GM10248 (cell line): ENCODE measurements at regions of chr5 and their contacts with region 1.

Region 1: DNA sequence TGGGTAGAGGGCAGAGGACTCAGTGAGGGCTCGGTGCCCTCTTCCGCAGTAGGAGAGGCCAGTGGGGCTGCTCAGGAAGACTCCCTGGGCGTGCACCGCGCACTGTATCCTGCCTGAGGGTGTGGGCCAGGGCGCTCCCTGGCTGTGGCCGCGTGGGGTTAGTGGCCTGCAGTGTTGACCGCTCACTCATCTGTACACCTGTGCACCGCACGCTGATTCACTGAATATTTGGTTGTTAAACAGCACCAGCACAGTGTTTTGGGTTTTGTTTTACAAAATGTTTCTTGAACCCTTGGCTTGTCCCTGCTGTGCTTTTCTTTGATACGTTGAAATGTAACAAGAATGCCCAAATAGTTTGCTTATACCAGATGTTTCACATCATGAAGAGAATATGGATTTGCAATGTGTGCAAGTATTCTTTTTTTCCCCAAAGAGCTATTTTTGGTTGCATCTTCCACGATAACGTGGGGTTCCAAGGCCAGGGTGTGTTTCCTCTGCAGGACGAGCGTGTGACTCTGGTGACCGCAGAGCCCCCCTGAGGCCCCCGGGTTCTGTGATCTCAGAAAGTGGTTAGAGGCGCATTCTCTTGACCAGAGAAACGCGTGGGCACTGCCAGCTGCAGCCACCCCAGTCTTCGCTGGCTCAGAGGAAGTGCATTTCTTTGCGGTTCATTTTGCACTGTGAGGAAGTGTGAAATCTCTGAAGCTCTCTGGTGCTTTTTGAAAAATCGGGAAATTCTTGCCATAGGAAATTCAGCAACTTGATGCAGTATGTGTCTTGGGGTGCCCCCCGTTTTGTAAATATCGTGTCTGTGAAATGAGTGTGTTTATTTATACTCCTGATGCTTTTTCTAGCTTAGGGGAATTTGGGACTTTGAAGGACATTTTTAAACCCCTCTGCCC is 46.9 kb downstream of the AHRR start:
- DNase-seq: peak; percentile 75
- CTCF ChIP-seq: no peak

Region 2: GRCh38 chr5:285639-286557 is 82.5 kb before region 1 on chr5:
- CTCF ChIA-PET with region 1: no interaction called
- POLR2A ChIA-PET with region 1: no interaction called
- DNase-seq: no peak
- CTCF ChIP-seq: no peak

Region 3: DNA sequence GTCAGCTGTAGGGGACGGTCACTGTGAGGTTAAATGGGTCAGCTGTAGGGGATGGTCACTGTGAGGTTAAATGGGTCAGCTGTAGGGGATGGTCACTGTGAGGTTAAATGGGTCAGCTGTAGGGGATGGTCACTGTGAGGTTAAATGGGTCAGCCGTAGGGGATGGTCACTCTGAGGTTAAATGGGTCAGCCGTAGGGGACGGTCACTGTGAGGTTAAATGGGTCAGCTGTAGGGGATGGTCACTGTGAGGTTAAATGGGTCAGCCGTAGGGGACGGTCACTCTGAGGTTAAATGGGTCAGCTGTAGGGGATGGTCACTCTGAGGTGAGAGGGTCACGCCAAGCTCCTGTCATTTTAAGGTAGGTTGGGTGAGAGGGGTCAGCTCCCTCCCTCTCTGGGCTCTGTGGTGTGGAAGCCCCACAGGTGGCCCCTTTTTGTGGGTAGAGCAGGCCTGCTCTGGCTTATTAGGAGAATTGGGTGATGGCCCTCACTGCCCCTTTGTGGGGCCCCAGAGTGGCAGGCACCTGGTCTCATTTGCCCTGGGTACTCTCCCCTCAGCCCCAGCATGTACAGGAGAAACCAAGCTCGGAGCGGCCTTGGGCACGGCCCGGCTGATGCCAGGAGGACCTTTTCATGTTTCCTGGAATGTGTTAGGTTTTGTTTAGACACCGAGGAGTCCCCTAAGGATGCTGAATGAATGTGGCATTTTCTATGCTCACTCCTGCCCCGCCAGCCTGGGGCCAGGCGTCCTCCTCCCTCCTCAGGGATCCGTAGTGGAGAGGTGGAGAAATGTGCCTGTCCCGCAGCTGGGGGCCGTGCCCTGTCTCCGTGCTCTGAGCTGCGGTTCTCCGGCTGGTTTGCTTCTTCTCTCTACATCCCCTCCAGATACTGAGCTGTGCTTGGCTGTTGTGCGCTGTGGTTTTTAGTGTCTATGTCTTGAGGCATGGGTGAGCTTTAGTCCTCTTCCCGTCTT is 15.5 kb before region 1 on chr5:
- CTCF ChIA-PET with region 1: interaction called, 13 read pairs
- POLR2A ChIA-PET with region 1: no interaction called
- DNase-seq: peak; percentile 24
- CTCF ChIP-seq: no peak

Region 4: DNA sequence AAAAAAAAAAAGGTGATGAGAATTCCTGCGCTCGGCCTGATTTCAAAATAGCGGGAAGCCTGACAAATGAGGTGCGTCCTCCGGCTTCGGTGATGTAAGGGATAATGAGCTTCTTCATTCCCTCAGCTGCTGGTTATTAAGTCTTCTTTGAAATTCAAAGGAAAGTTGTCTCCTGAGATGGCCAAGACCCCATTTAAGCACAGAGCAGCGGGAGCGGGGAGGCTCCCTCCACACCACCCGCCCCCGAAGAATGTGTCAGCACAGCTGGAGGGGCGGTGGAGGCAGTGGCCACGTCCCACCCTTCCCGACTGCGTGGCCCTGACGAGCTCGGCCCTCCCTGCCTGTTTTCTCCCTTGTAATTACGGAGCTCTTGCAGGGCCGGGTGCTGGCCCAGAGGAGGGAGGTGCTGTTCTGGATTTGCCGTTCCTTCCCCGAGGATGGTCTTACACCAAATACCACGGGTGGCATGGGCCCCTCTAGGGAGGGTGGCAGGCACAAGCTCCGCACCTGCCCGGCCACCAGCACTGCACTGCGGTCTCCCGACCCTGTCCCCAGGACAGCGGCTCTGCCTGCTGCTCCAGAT is 124.8 kb after region 1 on chr5:
- CTCF ChIA-PET with region 1: no interaction called
- POLR2A ChIA-PET with region 1: no interaction called
- DNase-seq: no peak
- CTCF ChIP-seq: no peak